ENCODE measurements at regions of chr4 and their contacts with region 1.

Region 1: GRCh38 chr4:139509727-139510410 is 46.1 kb downstream of the SETD7 start:
- DNase-seq: peak in 1 of 10 donors; percentile 36
- H3K4me3 ChIP-seq: no peak overlapping the region
- H3K27ac ChIP-seq: peak overlapping the region in 2 of 59 donors; percentile 33 to 39
- H3K27me3 ChIP-seq: no peaks in the 10 kb centered on the region
- CTCF ChIP-seq: peak in 52 of 56 donors; percentile 20 to 65 (median 49)

Region 2: GRCh38 chr4:139416073-139416673 is 93.7 kb before region 1 on chr4:
- intact Hi-C with region 1: loop called in 1 of 2 experiments (anchors 10 kb)
- DNase-seq: peak in 1 of 10 donors; percentile 18
- H3K4me3 ChIP-seq: no peak overlapping the region
- H3K27ac ChIP-seq: no peak overlapping the region
- H3K27me3 ChIP-seq: no peaks in the 10 kb centered on the region
- CTCF ChIP-seq: peak; percentile 57 to 87 (median 76)

Region 3: DNA sequence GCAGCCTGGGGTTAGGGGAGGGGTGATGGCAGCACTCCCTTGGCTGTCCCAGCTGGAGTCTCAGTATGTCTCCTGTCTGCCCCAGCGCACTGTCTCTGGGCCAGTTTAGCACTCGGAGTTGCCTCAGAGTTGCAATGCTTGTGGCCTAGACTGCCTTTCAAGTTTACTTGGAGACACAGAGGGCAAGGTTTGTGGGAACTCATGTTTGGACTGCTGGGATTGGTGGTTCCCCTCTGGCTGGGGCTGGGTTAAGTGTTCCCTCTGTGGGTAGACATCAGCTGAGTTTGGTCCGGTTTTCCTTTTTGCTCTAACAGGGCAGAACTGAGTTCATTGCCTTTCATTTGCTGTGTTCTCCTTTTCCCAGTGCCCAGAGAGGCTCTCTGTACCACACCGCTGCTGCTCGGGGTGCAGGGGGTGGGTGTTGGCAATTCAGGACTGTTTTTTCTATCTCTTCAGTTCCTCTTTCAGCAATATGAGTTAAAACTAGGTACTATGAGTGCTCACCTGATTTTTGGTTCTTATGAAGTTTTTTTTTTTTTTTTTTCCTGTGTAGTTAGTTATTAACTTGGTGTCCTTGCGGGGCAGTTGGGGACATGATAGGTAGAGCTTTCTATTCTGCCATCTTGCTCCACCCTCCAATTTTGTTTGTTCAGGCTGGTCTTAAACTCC is 38.7 kb before region 1 on chr4:
- intact Hi-C with region 1: no loop called
- DNase-seq: no peak
- H3K4me3 ChIP-seq: no peak overlapping the region
- H3K27ac ChIP-seq: no peak overlapping the region
- H3K27me3 ChIP-seq: no peaks in the 10 kb centered on the region
- CTCF ChIP-seq: no peak

Measured in dorsolateral prefrontal cortex (tissue), 120 donors.